Astrocyte of the cerebellum (primary cell): ENCODE measurements at regions of chr17 and their contacts with region 1.

Region 1: GRCh38 chr17:39573447-39574298 is 34.0 kb downstream of the NEUROD2 start:
- DNase-seq: no peak
- H3K4me3 ChIP-seq: peak overlapping the region; percentile 50
- CTCF ChIP-seq: no peak

Region 2: DNA sequence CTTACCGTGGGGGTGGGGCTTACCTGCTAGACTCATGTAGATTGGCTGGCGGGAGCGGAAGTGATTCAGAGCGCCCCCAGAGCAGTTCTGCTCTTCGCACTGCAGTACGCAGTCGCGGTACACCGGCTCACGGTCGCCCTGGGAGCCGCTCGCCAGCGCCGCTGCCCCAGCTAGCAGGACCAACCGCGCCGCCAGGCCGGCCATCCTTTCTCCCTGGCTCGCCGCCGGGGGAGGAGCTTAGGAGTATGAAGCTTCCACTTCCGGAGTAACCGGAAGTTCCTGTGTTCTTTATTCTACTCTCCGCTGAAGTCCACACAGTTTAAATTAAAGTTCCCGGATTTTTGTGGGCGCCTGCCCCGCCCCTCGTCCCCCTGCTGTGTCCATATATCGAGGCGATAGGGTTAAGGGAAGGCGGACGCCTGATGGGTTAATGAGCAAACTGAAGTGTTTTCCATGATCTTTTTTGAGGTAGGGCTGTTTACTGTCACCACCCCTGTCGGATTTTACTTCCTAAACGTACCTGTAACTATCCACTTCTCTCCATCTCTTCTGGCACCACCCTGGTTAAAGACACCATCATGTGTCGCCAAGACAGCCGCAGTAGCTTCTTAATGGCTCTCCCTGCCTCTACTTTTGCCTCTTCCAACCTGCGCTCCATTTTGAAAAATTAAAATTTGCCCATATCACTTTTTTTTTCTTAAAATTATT is 114.3 kb after region 1 on chr17 and contains the start of gene PGAP3:
- in situ Hi-C with region 1: no loop called
- DNase-seq: peak; percentile 73
- H3K4me3 ChIP-seq: peak within 1 kb of the TSS; percentile 71
- CTCF ChIP-seq: no peak

Region 3: GRCh38 chr17:39782485-39782884 is 208.8 kb after region 1 on chr17:
- in situ Hi-C with region 1: loop called (anchors 10 kb)
- DNase-seq: no peak
- H3K4me3 ChIP-seq: no peak overlapping the region
- CTCF ChIP-seq: no peak